HEK293 (cell line): ENCODE measurements at regions of chr17 and their contacts with region 1.

Region 1: GRCh38 chr17:63425482-63425881 is 20.6 kb downstream of the CYB561 start:
- H3K4me3 ChIP-seq: no peak overlapping the region
- H3K27ac ChIP-seq: no peak overlapping the region
- H3K4me1 ChIP-seq: no peaks in the 10 kb centered on the region
- CTCF ChIP-seq: peak; percentile 75

Region 2: DNA sequence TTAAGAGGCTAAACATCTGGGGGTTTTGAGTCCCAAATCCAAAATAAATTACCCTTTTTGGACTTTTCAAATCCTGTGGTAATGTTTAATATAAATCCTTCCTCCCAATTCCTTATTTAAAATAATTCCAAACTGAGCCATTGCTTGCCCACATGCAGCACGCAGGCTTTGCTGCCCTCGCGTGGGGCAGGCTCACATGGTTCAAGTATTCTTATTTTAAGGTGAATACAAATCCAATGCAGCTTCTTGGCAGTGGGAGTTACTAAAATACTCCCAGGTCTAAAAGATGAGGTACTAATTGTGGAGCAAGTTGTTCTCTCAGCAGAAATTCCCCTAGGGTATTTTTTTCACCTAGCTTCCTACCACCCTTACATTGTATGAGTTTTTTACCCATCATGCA is 12.4 kb before region 1 on chr17:
- CTCF ChIA-PET with region 1: interaction called, 18 read pairs
- POLR2A ChIA-PET with region 1: no interaction called
- H3K4me3 ChIP-seq: no peak overlapping the region
- H3K27ac ChIP-seq: no peak overlapping the region
- H3K4me1 ChIP-seq: no peaks in the 10 kb centered on the region
- CTCF ChIP-seq: no peak

Region 3: GRCh38 chr17:63455417-63455816 is 29.9 kb after region 1 on chr17:
- CTCF ChIA-PET with region 1: interaction called, 15 read pairs
- POLR2A ChIA-PET with region 1: no interaction called
- H3K4me3 ChIP-seq: no peak overlapping the region
- H3K27ac ChIP-seq: no peak overlapping the region
- H3K4me1 ChIP-seq: no peaks in the 10 kb centered on the region
- CTCF ChIP-seq: no peak

Region 4: DNA sequence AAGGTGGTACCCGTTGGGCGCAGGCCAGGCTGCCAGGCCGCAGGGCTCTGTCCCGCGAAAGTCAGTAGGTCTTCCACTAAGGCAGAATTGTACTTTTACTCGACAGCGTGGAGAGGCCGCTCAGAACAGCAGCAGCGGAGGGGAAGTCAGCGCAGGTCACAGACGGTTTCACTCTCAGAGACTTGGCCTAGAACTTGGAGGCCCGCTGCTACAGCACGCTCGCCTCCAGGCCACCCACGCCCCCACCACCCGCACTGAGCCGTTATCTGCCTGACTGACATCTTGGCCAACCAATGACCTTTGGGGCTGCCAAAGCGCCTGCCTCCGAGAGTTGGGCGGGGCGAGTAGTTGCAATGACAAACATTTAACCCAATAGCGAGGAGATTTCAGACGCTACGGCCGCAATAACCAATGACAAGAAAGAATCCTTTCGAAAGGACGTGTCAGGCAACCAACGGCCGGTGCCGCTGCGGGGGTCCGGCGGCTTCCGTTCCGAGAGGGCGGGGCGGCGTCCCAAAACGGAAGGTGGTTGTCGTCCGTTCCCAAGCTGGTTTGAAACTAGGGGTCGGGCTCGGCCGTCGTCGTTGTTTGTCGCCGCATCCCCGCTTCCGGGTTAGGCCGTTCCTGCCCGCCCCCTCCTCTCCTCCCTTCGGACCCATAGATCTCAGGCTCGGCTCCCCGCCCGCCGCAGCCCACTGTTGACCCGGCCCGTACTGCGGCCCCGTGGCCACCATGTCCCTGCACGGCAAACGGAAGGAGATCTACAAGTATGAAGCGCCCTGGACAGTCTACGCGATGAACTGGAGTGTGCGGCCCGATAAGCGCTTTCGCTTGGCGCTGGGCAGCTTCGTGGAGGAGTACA is 124.7 kb after region 1 on chr17 and contains the start of gene DCAF7:
- CTCF ChIA-PET with region 1: interaction called, 17 read pairs
- POLR2A ChIA-PET with region 1: interaction called, 6 read pairs
- H3K4me3 ChIP-seq: peak within 1 kb of the TSS; percentile 97
- H3K27ac ChIP-seq: peak within 1 kb of the TSS; percentile 96
- H3K4me1 ChIP-seq: peaks cover 12% of the 10 kb centered on the region
- CTCF ChIP-seq: peak; percentile 35; the same call in 1 of the 2 replicates

Region 5: DNA sequence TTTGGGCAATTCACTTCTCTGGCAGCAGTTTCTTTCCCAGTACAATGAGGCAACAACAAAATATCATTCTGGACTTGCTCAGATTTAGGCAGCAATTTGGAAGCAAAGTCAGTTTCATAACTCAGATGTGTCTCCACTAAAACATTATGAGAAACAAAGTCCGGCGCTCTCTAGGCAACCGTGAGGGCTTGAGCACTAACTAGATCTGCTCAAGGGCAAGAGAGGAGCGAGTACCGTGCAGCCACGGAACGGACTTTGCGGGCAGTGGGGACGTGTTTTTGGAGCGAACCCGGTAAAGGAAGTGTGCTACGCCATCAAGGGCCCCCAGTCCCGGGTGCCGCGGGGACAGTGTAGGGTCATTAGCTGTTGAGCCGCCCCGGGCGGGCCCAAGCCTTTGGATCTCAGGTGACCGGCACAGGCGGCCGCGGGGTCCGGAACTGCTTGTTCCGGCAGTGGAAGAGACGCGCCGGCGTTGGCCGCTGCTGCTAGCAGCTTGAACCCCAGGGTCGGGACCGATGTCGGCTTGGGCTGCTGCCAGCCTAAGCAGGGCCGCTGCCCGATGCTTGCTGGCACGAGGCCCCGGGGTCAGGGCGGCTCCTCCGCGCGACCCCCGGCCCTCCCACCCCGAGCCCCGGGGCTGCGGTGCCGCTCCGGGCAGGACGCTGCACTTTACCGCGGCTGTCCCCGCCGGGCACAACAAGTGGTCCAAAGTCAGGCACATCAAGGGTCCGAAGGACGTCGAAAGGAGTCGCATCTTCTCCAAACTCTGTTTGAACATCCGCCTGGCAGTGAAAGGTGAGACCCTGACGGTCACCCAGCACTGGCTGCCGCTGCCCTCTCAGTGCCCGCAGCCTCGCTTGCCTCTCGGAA is 175.3 kb after region 1 on chr17 and contains the start of gene TACO1:
- CTCF ChIA-PET with region 1: interaction called, 13 read pairs
- POLR2A ChIA-PET with region 1: interaction called, 4 read pairs
- H3K4me3 ChIP-seq: peak within 1 kb of the TSS; percentile 92
- H3K27ac ChIP-seq: peak within 1 kb of the TSS; percentile 75
- H3K4me1 ChIP-seq: no peaks in the 10 kb centered on the region
- CTCF ChIP-seq: no peak; the same call in 1 of the 2 replicates

Region 6: GRCh38 chr17:63675607-63676413 is 250.3 kb after region 1 on chr17:
- CTCF ChIA-PET with region 1: interaction called, 10 read pairs
- POLR2A ChIA-PET with region 1: interaction called, 5 read pairs
- H3K4me3 ChIP-seq: no peak overlapping the region
- H3K27ac ChIP-seq: peak overlapping the region; percentile 83
- H3K4me1 ChIP-seq: peaks cover 22% of the 10 kb centered on the region
- CTCF ChIP-seq: no peak